Breast epithelium (tissue), 4 donors: ENCODE measurements at regions of chr10 and their contacts with region 1.

Region 1: DNA sequence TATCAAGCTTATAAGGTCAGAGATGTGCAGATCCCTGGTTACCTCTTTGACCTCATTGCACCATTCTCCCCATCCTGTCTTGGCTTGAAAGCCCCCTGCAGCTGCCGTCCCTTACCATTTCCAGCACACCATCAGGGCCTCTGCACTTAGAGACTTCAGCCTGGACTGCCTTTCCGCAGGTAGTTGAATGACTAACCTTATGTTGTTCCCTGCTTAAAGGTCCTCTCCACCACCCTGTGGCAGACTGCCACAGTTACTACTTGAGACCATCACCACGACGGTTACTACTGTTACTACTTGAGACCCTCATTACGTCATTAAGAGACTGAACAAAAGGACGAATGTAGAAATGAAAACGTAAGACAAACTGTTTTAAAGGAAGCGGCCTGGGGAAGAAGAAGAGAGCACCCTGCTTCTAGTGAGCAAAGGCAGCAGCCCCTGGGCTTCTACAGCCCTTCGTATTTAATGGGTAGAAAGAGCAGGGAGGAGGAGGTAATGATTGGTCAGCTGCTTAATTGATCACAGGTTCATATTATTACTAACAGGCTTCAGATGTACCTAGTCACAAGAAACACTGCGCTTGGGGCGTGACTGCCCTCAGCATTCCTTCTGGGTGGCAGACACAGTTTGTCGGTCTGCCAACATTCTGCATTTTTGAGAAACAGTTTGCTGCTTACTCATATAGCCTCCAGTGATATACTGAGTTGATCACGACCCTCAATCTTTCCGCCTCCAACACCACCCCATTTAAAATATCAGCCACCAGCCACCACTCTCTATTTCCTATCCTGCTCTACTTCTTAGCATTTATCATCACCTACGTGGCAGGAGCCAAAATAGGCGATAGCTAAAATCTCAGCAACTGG is 74.1 kb upstream of the PARD3 start:
- DNase-seq: no peak
- H3K4me3 ChIP-seq: no peak overlapping the region
- H3K27ac ChIP-seq: no peak overlapping the region
- H3K4me1 ChIP-seq: no peaks in the 10 kb centered on the region
- H3K27me3 ChIP-seq: no peaks in the 10 kb centered on the region
- CTCF ChIP-seq: no peak
- POLR2A ChIP-seq: no peak

Region 2: DNA sequence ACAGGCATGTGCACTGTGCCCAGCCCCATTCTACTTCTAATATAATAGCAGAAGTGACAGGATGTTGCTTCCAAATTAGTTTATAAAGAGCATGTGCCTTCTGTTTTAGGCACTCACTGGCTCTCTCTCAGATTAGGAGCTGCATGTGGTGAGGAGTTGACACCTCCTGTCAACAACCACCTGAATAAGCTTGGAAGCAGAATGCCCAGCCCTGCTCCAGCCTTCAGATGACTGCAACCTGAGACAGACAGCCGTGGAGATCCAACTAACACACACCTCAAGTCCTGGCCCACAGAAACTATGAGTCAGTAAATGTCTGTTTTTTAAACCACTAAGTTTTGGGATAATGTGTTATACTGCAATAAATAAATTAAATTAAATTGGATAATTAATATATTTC is 128.6 kb before region 1 on chr10:
- intact Hi-C with region 1: loop called (anchors 5 kb)
- DNase-seq: no peak
- H3K4me3 ChIP-seq: no peak overlapping the region
- H3K27ac ChIP-seq: no peak overlapping the region
- H3K4me1 ChIP-seq: no peaks in the 10 kb centered on the region
- H3K27me3 ChIP-seq: no peaks in the 10 kb centered on the region
- CTCF ChIP-seq: no peak
- POLR2A ChIP-seq: no peak

Region 3: DNA sequence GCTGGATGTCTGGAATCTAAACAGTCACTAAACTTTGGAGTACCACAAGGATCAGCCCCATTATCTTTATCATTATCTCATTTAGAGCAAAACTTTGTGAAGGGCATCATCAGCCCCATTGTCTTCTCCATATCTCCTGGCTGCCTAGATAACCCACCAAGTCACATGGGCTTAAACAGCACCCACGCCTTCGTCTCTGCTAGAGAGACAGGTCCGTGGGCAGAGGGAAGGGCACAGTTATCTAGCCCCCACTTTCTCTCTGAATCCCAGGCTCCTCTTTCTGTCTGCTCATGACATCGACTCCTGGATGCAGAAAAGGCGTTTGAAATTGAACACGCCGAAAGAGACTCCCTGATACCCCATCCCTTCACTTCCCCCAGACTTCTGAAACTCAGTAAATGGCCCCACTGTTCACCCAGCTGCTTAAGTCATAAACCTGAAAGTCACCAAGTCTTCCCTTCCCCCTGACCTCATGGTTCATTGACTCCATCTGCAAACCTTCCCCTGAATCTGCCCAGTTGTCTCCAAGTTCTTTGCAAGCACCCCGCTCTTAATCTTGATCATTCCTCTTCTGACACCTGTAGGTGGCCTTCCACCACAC is 53.2 kb before region 1 on chr10:
- intact Hi-C with region 1: loop called (anchors 1 kb)
- DNase-seq: no peak
- H3K4me3 ChIP-seq: no peak overlapping the region
- H3K27ac ChIP-seq: no peak overlapping the region
- H3K4me1 ChIP-seq: no peaks in the 10 kb centered on the region
- H3K27me3 ChIP-seq: no peaks in the 10 kb centered on the region
- CTCF ChIP-seq: no peak
- POLR2A ChIP-seq: no peak